A549 (cell line): ENCODE measurements at regions of chr1 and their contacts with region 1.

Region 1: DNA sequence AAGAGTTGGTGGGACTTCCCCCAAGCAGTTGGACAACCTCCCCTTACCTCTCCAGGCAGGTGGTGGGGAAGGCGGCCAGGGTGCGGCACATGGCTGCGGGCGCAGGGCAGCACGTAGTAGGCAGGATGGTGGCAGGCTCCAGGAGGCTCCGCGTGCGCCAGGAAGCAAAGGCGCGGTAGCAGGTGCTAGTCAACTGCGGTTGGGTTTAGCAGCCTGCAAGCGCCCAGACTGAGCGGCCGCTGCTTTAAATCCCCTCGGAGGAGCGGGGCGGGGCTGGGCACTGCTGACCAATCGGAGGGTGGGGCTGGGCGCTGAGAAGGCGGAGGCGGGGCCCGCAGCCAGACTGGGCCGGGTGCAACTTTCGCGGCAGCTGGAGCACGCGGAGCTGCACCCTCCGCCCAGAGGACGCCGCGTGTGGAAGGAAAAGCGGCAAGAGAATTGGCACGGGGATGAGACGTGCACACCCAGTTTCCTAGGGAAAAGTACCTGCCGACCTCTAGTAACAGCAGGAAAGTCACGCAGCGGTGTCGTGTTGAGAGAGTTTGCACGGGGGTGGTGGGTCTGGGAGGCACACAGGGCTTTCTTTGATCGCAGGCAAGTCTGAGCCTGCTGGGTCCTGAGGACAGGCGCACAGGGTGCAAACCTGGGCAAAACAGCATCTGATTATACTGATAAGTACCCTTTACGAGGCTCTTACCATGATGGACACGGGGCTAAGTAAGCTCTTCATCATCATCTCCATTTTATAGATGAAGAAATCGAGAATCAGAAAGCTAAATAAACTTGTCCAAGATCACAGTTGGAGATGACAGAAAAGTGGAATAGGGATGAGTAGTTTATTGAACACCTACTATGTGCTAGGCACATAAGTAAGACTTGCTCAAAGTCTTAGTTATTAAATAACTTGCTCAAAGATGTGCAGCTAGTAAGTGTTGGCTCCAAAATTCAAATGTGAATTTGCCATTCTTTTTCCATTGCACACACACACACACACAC is at the start of gene RGS16:
- DNase-seq: peak; percentile 76 to 93
- ATAC-seq: peak; percentile 86 to 97
- H3K4me3 ChIP-seq: peak within 1 kb of the TSS; percentile 48
- H3K27ac ChIP-seq: peak within 1 kb of the TSS; percentile 23 to 63; a peak in 3 of 6 replicates
- H3K4me1 ChIP-seq: peaks cover 8% of the 10 kb centered on the region; the same call in 2 of the 3 replicates
- CTCF ChIP-seq: no peak
- EP300 ChIP-seq: no peak
- POLR2A ChIP-seq: peak; percentile 52
- RAD21 ChIP-seq: no peak
- polyA plus RNA-seq, gene RGS16: 0.30 and 0.45 TPM in 2 replicates

Region 2: DNA sequence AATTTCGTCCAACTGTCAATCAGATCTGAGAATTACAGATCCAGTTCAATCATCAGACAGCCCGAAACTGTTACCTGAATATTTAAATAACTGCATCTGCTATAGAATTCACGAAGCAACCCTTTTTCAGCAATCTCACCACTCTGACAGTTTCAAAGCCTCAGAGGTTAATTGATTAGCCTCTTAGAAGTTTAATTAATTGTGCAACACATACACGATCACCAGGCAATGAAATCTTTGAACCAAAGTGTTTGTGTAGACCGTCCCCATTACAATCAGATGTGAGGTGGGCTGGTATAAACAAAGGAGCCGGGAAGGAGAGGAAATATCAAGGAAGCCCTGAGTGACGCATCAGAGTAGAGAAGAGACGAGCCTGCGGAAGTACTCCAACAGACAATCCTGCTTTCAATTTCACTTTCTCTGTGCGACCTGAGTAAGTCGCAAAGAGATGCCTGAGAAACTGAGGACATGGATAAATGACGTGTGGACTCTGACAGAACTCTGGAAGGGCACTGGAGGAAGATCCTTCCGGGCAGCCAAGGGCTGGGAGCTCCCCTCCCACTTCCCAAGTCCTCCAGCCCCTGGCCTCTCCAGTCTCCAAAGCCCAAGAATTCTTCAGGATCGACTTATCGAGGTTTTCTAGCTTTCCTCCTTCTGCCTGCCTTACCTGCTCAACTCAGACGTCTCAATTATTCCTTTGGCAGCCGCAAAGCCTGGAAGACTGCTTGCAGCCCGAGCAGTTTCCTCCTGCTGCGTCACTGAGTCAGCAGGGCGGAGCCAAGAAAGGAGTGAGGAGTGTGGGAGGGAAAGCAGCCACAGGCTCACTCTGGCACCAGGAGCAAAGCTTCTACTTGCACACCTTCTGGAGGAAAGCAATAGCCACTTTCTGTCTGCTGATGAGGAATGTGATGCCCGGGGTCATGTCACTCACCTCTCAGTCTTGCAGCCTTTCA is 15.7 kb before region 1 on chr1 and contains the start of gene RNASEL:
- CTCF ChIA-PET with region 1: interaction called, 50 read pairs
- POLR2A ChIA-PET with region 1: no interaction called
- DNase-seq: peak; percentile 58 to 74
- ATAC-seq: peak; percentile 98 to 99
- H3K4me3 ChIP-seq: peak within 1 kb of the TSS; percentile 46
- H3K27ac ChIP-seq: peak within 1 kb of the TSS; percentile 62 to 90
- H3K4me1 ChIP-seq: 0 out of 3 replicates have a peak, but pooled peaks cover 5% of the 10 kb centered on the region
- CTCF ChIP-seq: no peak
- EP300 ChIP-seq: no peak
- POLR2A ChIP-seq: peak; percentile 36; the same call in 1 of the 2 replicates
- RAD21 ChIP-seq: no peak
- polyA plus RNA-seq, gene RNASEL: 4.1 and 4.6 TPM in 2 replicates

Region 3: DNA sequence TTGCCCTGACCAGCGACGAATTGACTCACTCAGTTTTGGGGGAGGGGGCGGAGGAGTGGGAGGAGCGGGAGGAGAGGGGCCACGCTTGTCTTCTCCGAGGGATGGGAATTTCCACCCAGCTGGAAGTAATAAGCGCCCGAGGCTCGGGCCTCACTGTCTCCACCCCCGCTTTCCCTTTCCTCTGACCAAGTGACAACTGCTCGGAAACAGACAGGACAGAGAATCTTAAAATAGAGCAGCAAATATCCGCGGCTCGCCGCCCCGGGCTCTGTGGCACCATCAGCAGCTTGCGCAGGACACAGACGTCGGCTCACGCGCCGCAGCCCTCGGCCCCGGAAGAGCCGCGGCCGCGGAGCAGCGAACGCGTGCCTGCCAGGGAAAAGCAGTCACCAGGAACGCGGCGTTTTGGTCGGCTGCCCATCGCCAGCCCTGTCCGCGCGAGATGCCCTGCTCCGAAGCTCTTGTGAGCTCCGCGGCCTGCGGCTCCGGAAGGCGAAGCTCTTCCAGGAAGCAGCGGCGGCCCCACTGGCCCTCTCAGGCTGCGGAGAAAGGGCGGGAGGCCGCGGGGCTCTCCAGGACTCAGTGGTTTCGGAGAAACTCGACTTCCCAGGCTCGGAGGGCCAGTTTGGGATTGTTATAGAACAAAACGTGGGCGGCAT is 10.5 kb after region 1 on chr1:
- CTCF ChIA-PET with region 1: interaction called, 34 read pairs
- POLR2A ChIA-PET with region 1: no interaction called
- DNase-seq: peak; percentile 35 to 42
- ATAC-seq: peak; percentile 71 to 84
- H3K4me3 ChIP-seq: peak overlapping the region; percentile 46
- H3K27ac ChIP-seq: peak overlapping the region; percentile 14 to 78; a peak in 5 of 6 replicates
- H3K4me1 ChIP-seq: peaks cover 11% of the 10 kb centered on the region; the same call in 1 of the 3 replicates
- CTCF ChIP-seq: no peak
- EP300 ChIP-seq: no peak
- POLR2A ChIP-seq: no peak
- RAD21 ChIP-seq: no peak

Region 4: GRCh38 chr1:182731852-182732545 is 127.5 kb after region 1 on chr1:
- CTCF ChIA-PET with region 1: interaction called, 12 read pairs
- POLR2A ChIA-PET with region 1: no interaction called
- DNase-seq: no peak
- ATAC-seq: no peak
- H3K4me3 ChIP-seq: no peak overlapping the region
- H3K27ac ChIP-seq: no peak overlapping the region
- H3K4me1 ChIP-seq: no peaks in the 10 kb centered on the region
- CTCF ChIP-seq: no peak
- EP300 ChIP-seq: no peak
- POLR2A ChIP-seq: no peak
- RAD21 ChIP-seq: no peak

Region 5: DNA sequence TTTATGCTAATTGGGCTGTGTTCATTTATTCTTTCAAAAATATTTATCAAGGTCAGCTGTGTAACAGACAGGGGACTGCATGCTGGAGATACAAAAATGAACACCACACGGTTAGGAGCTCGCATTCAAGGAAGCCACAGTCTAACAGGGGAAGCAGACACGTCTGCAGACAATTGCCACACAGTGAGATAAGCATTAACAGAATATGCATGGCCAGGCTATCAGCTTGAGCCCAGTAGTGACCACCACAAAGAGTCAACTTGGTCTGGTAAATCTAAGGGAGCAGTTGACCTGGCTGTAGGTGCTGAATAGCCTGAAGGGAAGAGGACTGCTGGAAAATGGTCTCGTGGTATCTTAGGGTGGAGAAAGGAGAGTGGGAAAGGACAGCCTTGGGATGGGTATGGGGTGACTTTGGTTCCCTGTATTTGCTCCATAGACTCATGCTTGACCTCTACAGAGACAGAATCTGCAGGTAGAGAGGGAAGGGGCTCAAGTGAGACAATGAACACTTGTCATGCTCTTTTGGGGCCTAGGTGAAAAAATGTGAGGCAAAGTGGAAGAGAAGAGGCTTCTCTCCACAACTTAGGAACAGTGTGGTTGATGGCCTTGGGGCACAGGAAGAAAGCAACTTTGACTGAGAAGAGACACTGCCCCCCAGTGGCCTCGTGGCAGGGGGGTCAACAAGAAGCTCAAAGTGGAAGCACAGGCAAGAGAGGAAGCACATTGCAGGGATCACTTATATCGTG is 177.5 kb after region 1 on chr1:
- CTCF ChIA-PET with region 1: interaction called, 415 read pairs
- POLR2A ChIA-PET with region 1: no interaction called
- DNase-seq: peak; percentile 28 to 47
- ATAC-seq: peak; percentile 42 to 78; a peak in 4 of 6 replicates
- H3K4me3 ChIP-seq: no peak overlapping the region
- H3K27ac ChIP-seq: no peak overlapping the region
- H3K4me1 ChIP-seq: no peaks in the 10 kb centered on the region
- CTCF ChIP-seq: peak; percentile 50
- EP300 ChIP-seq: no peak
- POLR2A ChIP-seq: no peak
- RAD21 ChIP-seq: peak; percentile 45 to 68; a peak in 4 of 5 replicates

Region 6: GRCh38 chr1:182789138-182790076 is 184.9 kb after region 1 on chr1 and contains the start of gene NPL:
- CTCF ChIA-PET with region 1: interaction called, 415 read pairs
- POLR2A ChIA-PET with region 1: no interaction called
- DNase-seq: peak; percentile 47 to 68
- ATAC-seq: peak; percentile 87 to 92
- H3K4me3 ChIP-seq: peak within 1 kb of the TSS; percentile 52
- H3K27ac ChIP-seq: peak within 1 kb of the TSS; percentile 64 to 79
- H3K4me1 ChIP-seq: no peaks in the 10 kb centered on the region
- CTCF ChIP-seq: no peak
- EP300 ChIP-seq: no peak
- POLR2A ChIP-seq: peak; percentile 54
- RAD21 ChIP-seq: no peak
- polyA plus RNA-seq, gene NPL: 1.0 and 1.3 TPM in 2 replicates